ENCODE measurements at regions of chr11 and their contacts with region 1.

Region 1: GRCh38 chr11:39461066-39461465 is 1998.4 kb downstream of the LRRC4C start:
- DNase-seq: no peak
- H3K4me3 ChIP-seq: no peak overlapping the region
- H3K27ac ChIP-seq: no peak overlapping the region
- H3K4me1 ChIP-seq: no peaks in the 10 kb centered on the region
- H3K27me3 ChIP-seq: no peaks in the 10 kb centered on the region
- CTCF ChIP-seq: no peak
- EP300 ChIP-seq: no peak
- POLR2A ChIP-seq: no peak

Region 2: DNA sequence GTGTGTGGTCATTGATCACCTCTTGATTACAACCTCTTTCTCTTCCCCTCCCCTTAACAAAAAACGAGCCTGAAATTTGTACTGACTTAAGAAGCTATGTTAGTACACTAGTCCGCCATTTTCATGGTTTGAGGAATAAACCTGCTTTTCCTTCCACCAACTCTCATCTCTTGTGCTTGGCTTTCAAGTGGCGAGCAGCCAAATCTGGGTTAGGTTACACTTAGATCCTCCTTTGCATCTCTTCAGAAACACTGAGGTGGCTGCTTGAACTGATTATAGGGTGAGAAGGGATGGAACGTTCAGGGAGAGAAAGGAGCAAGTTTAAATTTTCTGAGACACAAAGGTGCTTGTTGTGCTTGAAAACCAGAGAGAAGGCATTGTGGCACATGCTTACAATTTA is 173.1 kb before region 1 on chr11:
- intact Hi-C with region 1: no loop called
- DNase-seq: no peak
- H3K4me3 ChIP-seq: no peak overlapping the region
- H3K27ac ChIP-seq: no peak overlapping the region
- H3K4me1 ChIP-seq: no peaks in the 10 kb centered on the region
- H3K27me3 ChIP-seq: no peaks in the 10 kb centered on the region
- CTCF ChIP-seq: no peak
- EP300 ChIP-seq: no peak
- POLR2A ChIP-seq: no peak

Region 3: DNA sequence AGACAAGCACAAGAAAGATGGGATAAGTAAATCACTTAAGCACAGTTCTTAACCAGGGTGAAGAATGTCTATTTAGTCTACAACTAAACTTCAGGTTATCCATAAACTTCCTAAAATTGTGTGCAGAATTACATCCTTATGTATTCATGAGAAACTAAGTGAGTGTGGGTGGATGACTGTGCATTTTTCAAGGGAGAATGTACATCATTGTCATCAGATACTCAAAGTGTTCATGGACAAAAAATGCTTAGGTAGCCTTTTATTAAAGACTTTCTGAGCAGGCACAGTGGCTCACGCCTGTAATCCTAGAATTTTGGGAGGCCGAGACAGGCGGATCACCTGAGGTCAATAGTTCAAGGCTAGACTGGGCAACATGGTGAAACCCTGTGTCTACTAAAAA is 25.4 kb before region 1 on chr11:
- intact Hi-C with region 1: loop called in 1 of 4 experiments (anchors 1 kb)
- DNase-seq: no peak
- H3K4me3 ChIP-seq: no peak overlapping the region
- H3K27ac ChIP-seq: no peak overlapping the region
- H3K4me1 ChIP-seq: no peaks in the 10 kb centered on the region
- H3K27me3 ChIP-seq: no peaks in the 10 kb centered on the region
- CTCF ChIP-seq: no peak
- EP300 ChIP-seq: no peak
- POLR2A ChIP-seq: no peak

Measured in ovary (tissue), 10 donors.